ENCODE measurements at regions of chr11 and their contacts with region 1.

Region 1: GRCh38 chr11:4187055-4187988 is 92.7 kb downstream of the RRM1 start:
- DNase-seq: peak; percentile 96 to 97
- H3K4me3 ChIP-seq: peak overlapping the region; percentile 59 to 86 (median 64)
- H3K27ac ChIP-seq: peak overlapping the region; percentile 32 to 84 (median 71)
- H3K4me1 ChIP-seq: peaks cover 0 to 36% (median 24%) of the 10 kb centered on the region in 4 donors
- H3K27me3 ChIP-seq: no peaks in the 10 kb centered on the region
- CTCF ChIP-seq: peak in 5 of 7 experiments; percentile 91 to 97 (median 95)
- EP300 ChIP-seq: no peak
- POLR2A ChIP-seq: no peak

Region 2: GRCh38 chr11:4493480-4493818 is 306.1 kb after region 1 on chr11:
- intact Hi-C with region 1: loop called (anchors 5 kb)
- DNase-seq: no peak
- H3K4me3 ChIP-seq: no peak overlapping the region
- H3K27ac ChIP-seq: no peak overlapping the region
- H3K4me1 ChIP-seq: peaks cover 0 to 30% (median 19%) of the 10 kb centered on the region in 4 donors
- H3K27me3 ChIP-seq: no peaks in the 10 kb centered on the region
- CTCF ChIP-seq: no peak
- EP300 ChIP-seq: no peak
- POLR2A ChIP-seq: no peak

Region 3: GRCh38 chr11:4539603-4540219 is 352.4 kb after region 1 on chr11:
- intact Hi-C with region 1: loop called (anchors 10 kb)
- DNase-seq: peak; percentile 60 to 73
- H3K4me3 ChIP-seq: no peak overlapping the region
- H3K27ac ChIP-seq: no peak overlapping the region
- H3K4me1 ChIP-seq: peaks cover 0 to 6% (median 0%) of the 10 kb centered on the region in 4 donors
- H3K27me3 ChIP-seq: no peaks in the 10 kb centered on the region
- CTCF ChIP-seq: peak in 4 of 7 experiments; percentile 53 to 63 (median 57)
- EP300 ChIP-seq: no peak
- POLR2A ChIP-seq: no peak

Measured in stomach (tissue), 19 donors.